ENCODE measurements at regions of chr9 and their contacts with region 1.

Region 1: DNA sequence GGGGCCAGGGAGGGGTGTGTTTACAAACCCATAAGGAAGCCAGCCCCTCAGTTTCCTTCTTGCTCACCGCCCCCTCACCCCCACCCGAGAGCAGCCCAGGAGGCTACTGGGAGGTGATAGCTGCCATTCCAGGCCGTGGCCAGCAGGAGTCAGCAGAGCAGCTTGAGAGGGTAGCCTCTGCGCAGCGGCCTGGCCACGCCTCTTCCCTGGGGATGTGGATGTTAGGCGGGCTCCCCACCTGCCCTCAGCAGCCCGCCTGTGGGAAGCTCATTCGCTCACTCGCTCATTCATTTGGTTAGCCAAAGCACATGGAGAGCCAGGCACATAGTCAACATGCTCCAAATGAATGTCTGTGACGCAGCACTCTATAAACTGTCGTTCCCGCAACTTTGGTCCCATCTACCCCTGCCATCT is 6.1 kb upstream of the DPM2 start:
- DNase-seq: peak; percentile 65
- H3K4me3 Mint-ChIP-seq: no peak overlapping the region
- H3K27ac Mint-ChIP-seq: no peak overlapping the region
- H3K4me1 Mint-ChIP-seq: peaks cover 14% of the 10 kb centered on the region
- H3K27me3 Mint-ChIP-seq: peaks cover 2% of the 10 kb centered on the region

Region 2: GRCh38 chr9:127869310-127870152 is 74.2 kb before region 1 on chr9:
- intact Hi-C with region 1: no loop called
- DNase-seq: peak; percentile 69
- H3K4me3 Mint-ChIP-seq: no peak overlapping the region
- H3K27ac Mint-ChIP-seq: no peak overlapping the region
- H3K4me1 Mint-ChIP-seq: peaks cover 12% of the 10 kb centered on the region
- H3K27me3 Mint-ChIP-seq: no peaks in the 10 kb centered on the region

Region 3: GRCh38 chr9:127916665-127917613 is 26.8 kb before region 1 on chr9 and contains the start of gene ST6GALNAC4:
- intact Hi-C with region 1: no loop called
- DNase-seq: peak; percentile 91
- H3K4me3 Mint-ChIP-seq: peak within 1 kb of the TSS; percentile 84
- H3K27ac Mint-ChIP-seq: peak within 1 kb of the TSS; percentile 89
- H3K4me1 Mint-ChIP-seq: peaks cover 57% of the 10 kb centered on the region
- H3K27me3 Mint-ChIP-seq: peaks cover 3% of the 10 kb centered on the region
- total RNA-seq, gene ST6GALNAC4: 30.8 and 31.6 TPM in 2 replicates

Region 4: DNA sequence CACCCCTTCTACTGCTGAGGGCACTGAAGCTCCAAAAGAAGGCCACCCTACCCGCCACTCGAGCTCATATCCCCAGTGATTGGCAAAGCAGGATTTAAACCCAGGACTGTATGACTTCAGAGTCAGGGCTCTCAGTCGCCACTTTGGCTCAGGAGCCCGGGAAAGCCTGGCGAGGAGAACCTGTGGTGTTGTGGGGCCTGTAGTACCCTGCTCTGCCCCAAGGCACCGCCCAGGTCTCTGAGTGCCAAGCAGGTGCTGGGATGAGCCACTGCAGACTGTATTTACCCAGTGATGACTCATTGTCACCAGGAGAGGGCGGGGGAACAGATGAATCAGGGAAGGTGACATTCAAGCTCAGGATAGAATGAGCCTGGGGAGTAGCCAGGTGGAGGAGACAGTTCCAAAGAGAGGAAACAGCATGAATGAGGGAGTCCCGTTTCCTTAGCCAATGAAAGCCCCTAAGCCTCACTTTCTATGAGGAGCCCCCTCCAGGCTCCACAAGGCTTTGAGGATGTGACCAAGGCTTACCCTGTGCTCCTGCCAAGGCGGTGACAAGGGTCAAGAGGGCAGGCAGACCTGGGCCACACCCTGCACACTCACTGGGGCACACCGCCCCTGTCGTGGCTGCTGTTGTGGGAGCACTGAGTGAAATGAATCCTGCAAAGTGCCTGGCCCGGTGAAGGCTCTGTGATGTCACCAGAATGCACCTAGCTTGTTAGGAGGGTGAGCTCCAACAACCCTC is 11.7 kb after region 1 on chr9:
- intact Hi-C with region 1: loop called (anchors 1 kb)
- DNase-seq: peak; percentile 56
- H3K4me3 Mint-ChIP-seq: peak overlapping the region; percentile 12
- H3K27ac Mint-ChIP-seq: peak overlapping the region; percentile 73
- H3K4me1 Mint-ChIP-seq: peaks cover 74% of the 10 kb centered on the region
- H3K27me3 Mint-ChIP-seq: peaks cover 2% of the 10 kb centered on the region

Region 5: DNA sequence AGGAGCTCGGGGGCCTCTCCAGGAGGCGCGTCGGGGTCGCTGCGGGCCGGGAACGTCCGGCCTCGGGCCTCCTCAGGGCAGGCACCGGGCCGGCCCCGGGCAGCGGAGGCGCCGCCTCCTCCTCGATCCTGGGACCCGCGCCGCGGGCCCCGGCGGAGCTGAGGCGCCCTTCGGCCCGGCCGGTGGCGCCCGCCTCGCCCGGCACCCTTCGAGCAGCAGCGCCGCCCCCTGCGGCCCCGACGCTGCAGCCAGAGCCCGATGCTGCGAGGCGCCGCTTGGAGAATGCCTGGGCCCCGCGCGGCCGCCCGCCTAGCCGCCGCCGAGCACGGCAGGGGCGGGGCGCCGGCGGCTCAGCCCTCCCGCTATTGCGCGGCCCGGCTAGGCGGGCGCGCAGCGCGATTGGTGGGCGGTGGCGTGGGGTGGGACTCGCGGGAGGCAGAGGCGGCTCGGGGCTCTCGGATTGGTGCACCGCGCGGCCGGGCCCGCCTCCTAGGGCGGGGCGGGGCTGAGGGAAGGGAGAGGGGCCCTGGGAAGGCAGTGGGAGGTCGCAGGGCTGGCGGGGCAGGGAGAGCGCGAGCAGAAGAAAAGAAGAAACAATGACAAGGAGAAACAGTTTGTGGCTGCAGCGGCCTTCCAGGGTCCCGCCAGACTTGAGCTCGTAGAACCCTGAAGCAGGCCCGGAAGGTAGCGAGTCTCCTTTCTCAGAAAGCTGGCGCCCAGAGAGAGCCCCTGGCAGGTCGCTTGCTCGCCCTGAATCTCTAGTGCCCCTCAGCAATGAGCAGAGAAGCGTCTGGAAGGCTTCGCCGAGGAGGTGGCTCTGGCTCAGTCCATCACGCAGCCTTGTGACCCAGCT is 37.2 kb after region 1 on chr9 and contains the start of gene EEIG1:
- intact Hi-C with region 1: loop called (anchors 2 kb)
- DNase-seq: peak; percentile 98
- H3K4me3 Mint-ChIP-seq: peak within 1 kb of the TSS; percentile 93
- H3K27ac Mint-ChIP-seq: peak within 1 kb of the TSS; percentile 84
- H3K4me1 Mint-ChIP-seq: peaks cover 48% of the 10 kb centered on the region
- H3K27me3 Mint-ChIP-seq: no peaks in the 10 kb centered on the region
- total RNA-seq, gene EEIG1: 39.8 and 43.4 TPM in 2 replicates

Region 6: DNA sequence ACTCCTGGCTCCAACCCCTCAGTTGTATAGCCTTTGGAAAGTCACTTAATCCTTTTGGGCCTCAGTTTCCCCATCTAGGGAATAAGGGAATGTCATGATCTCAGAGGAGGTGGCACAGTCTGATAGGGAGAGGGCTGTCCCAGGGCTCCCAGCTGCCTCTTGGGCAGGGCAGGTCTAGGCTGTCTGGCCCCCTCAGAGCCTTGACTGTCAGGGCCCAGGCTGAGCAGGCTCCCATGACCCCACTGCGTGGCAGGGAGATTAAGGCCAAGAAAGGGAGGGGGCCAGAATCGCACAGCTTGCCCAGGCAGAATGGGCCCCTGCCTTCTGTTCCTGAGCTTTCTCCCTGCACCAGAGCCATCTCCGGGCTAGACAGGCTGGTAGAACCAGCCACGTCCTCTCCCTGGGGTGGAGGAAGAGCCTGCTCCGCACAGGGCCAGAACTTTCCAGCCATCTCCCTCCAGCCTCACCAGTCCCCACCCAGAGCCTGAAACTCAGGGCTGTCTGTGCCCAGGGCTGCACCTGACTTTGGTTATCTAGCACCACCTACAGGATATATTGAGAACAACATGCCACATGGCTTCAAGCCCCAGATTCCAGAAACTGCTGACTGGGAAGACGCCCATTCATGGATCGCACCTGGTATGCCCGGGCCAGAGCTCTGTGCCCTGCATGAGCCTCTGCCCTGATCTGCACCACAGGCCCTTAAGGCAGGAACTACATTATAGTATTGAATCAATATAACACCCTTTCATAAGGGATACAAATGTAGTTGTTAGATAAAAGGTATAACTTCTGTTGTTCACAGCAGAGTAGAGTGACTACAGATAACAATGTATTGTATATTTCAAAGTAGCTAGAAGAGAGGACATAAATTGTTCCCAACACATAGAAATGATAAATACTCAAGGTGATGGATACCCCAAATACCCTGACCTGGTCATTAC is 91.4 kb after region 1 on chr9:
- intact Hi-C with region 1: loop called (anchors 1 kb)
- DNase-seq: peak; percentile 62
- H3K4me3 Mint-ChIP-seq: no peak overlapping the region
- H3K27ac Mint-ChIP-seq: no peak overlapping the region
- H3K4me1 Mint-ChIP-seq: peaks cover 36% of the 10 kb centered on the region
- H3K27me3 Mint-ChIP-seq: peaks cover 9% of the 10 kb centered on the region

Region 7: GRCh38 chr9:128084746-128085145 is 141.0 kb after region 1 on chr9:
- intact Hi-C with region 1: loop called (anchors 1 kb)
- DNase-seq: no peak
- H3K4me3 Mint-ChIP-seq: no peak overlapping the region
- H3K27ac Mint-ChIP-seq: no peak overlapping the region
- H3K4me1 Mint-ChIP-seq: peaks cover 30% of the 10 kb centered on the region
- H3K27me3 Mint-ChIP-seq: no peaks in the 10 kb centered on the region

Region 8: GRCh38 chr9:128117613-128118471 is 174.1 kb after region 1 on chr9:
- intact Hi-C with region 1: loop called (anchors 1 kb)
- DNase-seq: peak; percentile 88
- H3K4me3 Mint-ChIP-seq: no peak overlapping the region
- H3K27ac Mint-ChIP-seq: peak overlapping the region; percentile 66
- H3K4me1 Mint-ChIP-seq: peaks cover 12% of the 10 kb centered on the region
- H3K27me3 Mint-ChIP-seq: no peaks in the 10 kb centered on the region

Region 9: GRCh38 chr9:128136816-128137793 is 193.4 kb after region 1 on chr9:
- intact Hi-C with region 1: no loop called
- DNase-seq: no peak
- H3K4me3 Mint-ChIP-seq: no peak overlapping the region
- H3K27ac Mint-ChIP-seq: no peak overlapping the region
- H3K4me1 Mint-ChIP-seq: peaks cover 23% of the 10 kb centered on the region
- H3K27me3 Mint-ChIP-seq: peaks cover 25% of the 10 kb centered on the region